ENCODE measurements at regions of chr10 and their contacts with region 1.

Region 1: DNA sequence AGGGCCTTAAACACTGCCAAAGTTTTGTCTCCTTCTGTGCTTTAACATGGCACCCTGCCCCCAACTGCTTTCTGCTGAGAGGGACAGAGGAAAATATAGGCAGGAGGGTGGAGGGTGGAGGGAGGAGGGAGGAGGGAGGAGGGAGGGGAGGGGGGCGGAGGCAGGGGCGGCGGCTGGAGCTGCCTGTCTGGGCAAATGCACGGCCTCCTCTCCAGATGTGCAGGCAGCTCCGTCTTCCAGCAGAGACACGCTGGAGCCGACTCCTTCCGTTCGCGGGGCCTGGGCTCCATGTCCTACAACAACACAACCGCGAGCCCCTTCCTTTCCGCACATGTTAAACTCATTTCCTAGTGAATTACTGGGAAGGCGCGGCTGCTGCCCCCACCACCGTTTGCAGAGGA is 14.2 kb downstream of the EBF3 start:
- DNase-seq: peak; percentile 63 to 74
- H3K4me3 ChIP-seq: no peak overlapping the region
- H3K27ac ChIP-seq: peak overlapping the region in 1 of 2 donors; percentile 17
- H3K4me1 ChIP-seq: peaks cover 0 to 26% (median 8%) of the 10 kb centered on the region in 4 donors
- H3K27me3 ChIP-seq: peaks cover 0 to 3% of the 10 kb centered on the region in 2 donors
- CTCF ChIP-seq: no peak

Region 2: GRCh38 chr10:129466703-129467358 is 483.1 kb before region 1 on chr10 and contains the start of gene MGMT:
- intact Hi-C with region 1: loop called (anchors 10 kb)
- DNase-seq: peak; percentile 95 to 96
- H3K4me3 ChIP-seq: peak within 1 kb of the TSS; percentile 59 to 93
- H3K27ac ChIP-seq: peak within 1 kb of the TSS; percentile 81 to 88
- H3K4me1 ChIP-seq: peaks cover 0 to 17% (median 12%) of the 10 kb centered on the region in 4 donors
- H3K27me3 ChIP-seq: no peaks in the 10 kb centered on the region
- CTCF ChIP-seq: no peak

Region 3: DNA sequence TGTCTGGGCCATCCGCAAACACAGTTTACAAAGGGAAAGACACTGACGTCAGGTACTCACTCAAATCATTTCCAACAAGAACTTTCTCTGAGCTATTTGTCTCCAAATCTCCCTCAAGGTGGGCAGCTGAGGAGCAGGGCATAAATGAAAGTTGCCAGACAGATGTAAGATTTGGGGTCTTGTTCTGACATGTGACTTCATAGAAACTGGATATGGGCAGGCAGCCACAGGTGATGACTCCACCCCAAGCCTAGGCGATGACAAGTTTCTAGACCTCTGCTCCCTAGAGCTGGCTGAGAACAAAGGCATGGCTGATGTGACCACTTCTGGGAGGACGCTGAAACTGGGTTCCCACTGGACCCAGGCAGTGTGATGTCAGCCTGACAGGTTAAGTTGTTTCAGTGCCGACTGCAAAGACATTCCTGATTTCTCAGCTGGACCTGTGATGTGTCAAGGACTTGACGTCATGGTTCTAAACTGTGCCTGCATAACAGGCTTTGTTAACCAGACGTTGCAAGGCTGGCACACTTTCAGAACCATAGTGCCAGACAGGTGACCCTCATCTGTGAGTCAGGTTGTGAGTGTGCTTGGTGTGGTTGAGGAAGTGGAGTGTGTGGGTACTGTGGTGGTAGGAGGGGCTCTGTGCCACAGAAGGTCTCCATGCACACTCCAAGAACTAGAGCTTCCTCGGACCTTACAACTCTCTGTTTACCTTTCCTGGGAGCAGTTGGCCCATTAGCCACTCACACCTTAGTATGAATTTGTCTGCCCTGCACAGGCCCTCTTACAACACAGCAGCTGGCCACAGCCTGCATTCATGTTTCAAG is 54.1 kb after region 1 on chr10:
- intact Hi-C with region 1: no loop called
- DNase-seq: no peak
- H3K4me3 ChIP-seq: no peak overlapping the region
- H3K27ac ChIP-seq: no peak overlapping the region
- H3K4me1 ChIP-seq: no peaks in the 10 kb centered on the region
- H3K27me3 ChIP-seq: peaks cover 0 to 8% of the 10 kb centered on the region in 2 donors
- CTCF ChIP-seq: no peak